Activated CD8-positive, alpha-beta T cell treated with anti-CD3 and anti-CD28 coated beads for 36 hours (primary cell): ENCODE measurements at regions of chr3 and their contacts with region 1.

Region 1: DNA sequence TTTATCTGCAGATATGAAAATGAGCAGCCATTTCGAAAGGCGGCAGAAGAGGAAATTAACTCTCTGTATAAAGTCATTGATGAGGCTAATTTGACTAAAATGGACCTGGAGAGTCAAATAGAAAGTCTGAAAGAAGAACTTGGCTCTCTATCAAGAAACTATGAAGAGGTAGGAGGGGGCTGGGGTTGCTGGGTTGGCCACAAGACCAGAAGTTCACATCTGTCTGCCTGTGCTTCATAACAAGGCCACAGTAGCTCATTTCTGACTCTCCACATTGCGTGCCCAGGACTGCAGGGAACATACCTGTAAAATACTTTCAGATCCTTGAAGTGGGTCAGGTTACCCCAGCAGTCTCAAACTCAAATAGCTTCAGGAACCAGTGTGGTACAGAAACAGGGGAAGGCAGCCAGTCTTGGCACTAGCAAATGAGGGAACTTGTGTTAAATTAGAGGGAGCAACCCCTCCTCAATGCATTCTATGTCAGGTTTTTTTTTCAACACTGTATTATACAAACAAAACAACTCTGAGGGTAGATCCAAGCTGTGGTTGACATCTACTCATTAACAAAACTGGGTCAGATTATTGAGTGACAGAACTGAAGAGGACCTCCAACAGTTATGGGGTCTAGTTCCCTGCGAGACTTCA is 48.7 kb downstream of the BFSP2 start:
- DNase-seq: peak; percentile 77
- ATAC-seq: peak; percentile 88
- H3K4me3 Mint-ChIP-seq: no peak overlapping the region
- H3K27ac Mint-ChIP-seq: peak overlapping the region; percentile 67
- H3K4me1 Mint-ChIP-seq: peaks cover 23% of the 10 kb centered on the region
- H3K27me3 Mint-ChIP-seq: no peaks in the 10 kb centered on the region
- CTCF ChIP-seq: no peak

Region 2: DNA sequence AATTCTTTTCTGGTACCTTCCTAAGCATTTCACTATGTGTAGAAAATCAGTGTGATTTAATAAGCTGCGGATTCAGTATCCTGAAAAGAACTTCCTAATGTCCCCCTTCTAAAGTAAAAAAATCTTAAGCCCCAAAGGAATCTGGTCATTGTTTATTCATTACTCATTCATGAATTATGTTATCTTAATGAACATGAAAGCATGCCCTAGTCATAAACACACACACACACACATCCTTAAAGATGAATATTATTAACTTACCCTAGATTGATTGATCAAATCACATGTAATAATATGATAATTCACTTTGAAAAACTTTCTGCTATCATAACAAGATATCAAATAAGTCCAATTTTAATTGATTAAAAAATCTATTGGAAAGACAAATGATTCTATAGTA is 145.2 kb before region 1 on chr3:
- CTCF ChIA-PET with region 1: no interaction called
- POLR2A ChIA-PET with region 1: no interaction called
- intact Hi-C with region 1: no loop called
- DNase-seq: no peak
- ATAC-seq: no peak
- H3K4me3 Mint-ChIP-seq: no peak overlapping the region
- H3K27ac Mint-ChIP-seq: no peak overlapping the region
- H3K4me1 Mint-ChIP-seq: peaks cover 5% of the 10 kb centered on the region
- H3K27me3 Mint-ChIP-seq: peaks cover 3% of the 10 kb centered on the region
- CTCF ChIP-seq: no peak

Region 3: GRCh38 chr3:133494469-133494868 is 45.9 kb after region 1 on chr3:
- CTCF ChIA-PET with region 1: interaction called, 37 read pairs
- POLR2A ChIA-PET with region 1: interaction called, 3 read pairs
- intact Hi-C with region 1: loop called (anchors 5 kb)
- DNase-seq: peak; percentile 33
- ATAC-seq: no peak
- H3K4me3 Mint-ChIP-seq: no peak overlapping the region
- H3K27ac Mint-ChIP-seq: no peak overlapping the region
- H3K4me1 Mint-ChIP-seq: peaks cover 52% of the 10 kb centered on the region
- H3K27me3 Mint-ChIP-seq: no peaks in the 10 kb centered on the region
- CTCF ChIP-seq: no peak

Region 4: DNA sequence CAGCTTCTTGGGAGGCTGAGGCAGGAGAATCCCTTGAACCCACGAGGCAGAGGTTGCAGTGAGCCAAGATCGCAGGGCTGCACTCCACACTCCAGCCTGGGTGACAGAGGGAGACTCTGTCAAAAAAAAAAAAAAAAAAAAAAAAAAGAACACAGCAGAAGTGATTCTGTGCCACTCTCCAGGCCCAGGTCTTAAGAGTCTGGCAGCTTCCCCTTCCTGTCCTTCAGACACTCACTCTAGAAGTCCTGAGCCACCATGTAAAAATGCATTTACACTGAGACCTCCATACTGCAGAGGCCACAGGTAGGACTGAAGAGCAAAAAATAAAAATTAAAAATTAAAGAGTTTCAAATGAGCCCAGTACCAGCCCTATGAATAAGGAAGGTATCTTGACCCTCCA is 113.1 kb after region 1 on chr3:
- CTCF ChIA-PET with region 1: no interaction called
- POLR2A ChIA-PET with region 1: no interaction called
- intact Hi-C with region 1: no loop called
- DNase-seq: no peak
- ATAC-seq: no peak
- H3K4me3 Mint-ChIP-seq: no peak overlapping the region
- H3K27ac Mint-ChIP-seq: no peak overlapping the region
- H3K4me1 Mint-ChIP-seq: no peaks in the 10 kb centered on the region
- H3K27me3 Mint-ChIP-seq: no peaks in the 10 kb centered on the region
- CTCF ChIP-seq: no peak

Region 5: GRCh38 chr3:133578548-133579191 is 130.1 kb after region 1 on chr3:
- CTCF ChIA-PET with region 1: interaction called, 4 read pairs
- POLR2A ChIA-PET with region 1: interaction called, 8 read pairs
- intact Hi-C with region 1: loop called (anchors 5 kb)
- DNase-seq: no peak
- ATAC-seq: no peak
- H3K4me3 Mint-ChIP-seq: peak overlapping the region; percentile 81
- H3K27ac Mint-ChIP-seq: peak overlapping the region; percentile 85
- H3K4me1 Mint-ChIP-seq: peaks cover 62% of the 10 kb centered on the region
- H3K27me3 Mint-ChIP-seq: no peaks in the 10 kb centered on the region
- CTCF ChIP-seq: peak; percentile 67